ENCODE measurements at regions of chr21 and their contacts with region 1.

Region 1: DNA sequence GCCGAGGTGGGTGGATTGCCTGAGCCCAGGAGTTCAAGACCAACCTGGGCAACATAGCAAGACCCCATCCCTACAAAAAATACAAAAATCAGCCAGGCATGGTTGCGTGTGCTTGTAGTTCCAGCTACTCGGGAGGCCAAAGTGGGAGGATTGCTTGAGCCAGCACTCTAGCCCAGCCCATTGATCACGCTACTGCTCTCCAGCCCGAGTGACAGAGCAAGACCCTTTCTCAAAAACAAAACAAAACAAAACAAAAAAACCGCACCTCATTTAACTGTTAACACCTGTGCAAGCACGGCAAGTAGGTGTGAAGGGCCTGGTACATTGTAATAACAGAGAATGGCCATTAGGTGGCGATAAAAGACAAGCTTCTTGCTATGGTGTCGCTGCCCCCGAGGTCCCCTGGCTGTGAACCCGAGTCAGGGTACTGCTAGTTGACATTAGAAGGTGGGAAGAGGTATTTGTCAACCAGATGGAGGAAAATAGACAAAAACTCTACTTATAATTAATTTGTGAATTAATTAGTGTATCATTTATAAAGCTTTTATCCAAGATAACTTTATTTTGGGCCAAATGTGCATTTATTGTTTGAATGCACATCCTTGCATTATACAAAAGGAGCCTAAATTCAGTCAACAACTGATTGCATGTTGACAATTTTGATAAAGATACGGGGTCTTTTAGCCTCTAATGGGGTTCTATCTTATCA is 66.5 kb downstream of the SH3BGR start:
- DNase-seq: peak; percentile 53
- H3K4me3 ChIP-seq: no peak overlapping the region
- H3K27ac ChIP-seq: no peak overlapping the region
- H3K4me1 ChIP-seq: no peaks in the 10 kb centered on the region
- H3K27me3 ChIP-seq: no peaks in the 10 kb centered on the region; the same call in 1 of the 2 replicates

Region 2: DNA sequence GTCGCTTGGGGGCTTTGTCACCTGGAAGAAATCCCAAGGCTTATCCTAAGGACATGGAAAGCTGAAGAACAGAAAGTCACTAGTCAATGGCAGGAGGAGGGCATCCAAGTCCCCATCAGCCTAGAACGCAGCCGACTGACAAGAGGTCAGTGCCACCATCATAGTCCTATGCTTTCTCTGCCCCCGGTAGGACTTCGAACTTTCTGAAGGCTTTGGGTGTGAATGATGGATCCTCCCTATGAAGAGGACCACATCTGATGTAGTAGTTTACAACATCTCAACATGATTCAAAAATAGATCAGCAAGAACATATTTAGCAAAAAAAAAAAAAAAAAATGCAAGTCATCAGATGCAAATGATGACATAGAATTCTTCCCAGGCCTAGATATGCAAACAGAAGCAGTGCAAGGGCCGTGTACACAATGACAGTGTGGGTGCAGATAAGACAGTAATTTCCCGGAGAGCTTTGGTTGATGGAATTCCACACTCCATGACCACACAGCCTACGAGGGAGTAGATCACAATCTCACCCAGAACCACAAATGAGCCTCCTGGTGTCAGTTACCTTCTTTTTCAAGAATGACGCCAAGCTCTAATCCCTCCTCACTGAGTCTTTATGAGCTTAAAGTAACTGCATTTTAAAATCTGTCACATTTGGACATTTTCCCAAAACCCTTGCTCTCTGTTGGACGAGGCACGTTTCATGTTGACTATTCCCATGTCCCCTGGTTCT is 423.3 kb before region 1 on chr21:
- in situ Hi-C with region 1: no loop called
- DNase-seq: peak; percentile 47
- H3K4me3 ChIP-seq: no peak overlapping the region
- H3K27ac ChIP-seq: no peak overlapping the region
- H3K4me1 ChIP-seq: no peaks in the 10 kb centered on the region
- H3K27me3 ChIP-seq: no peaks in the 10 kb centered on the region

Region 3: GRCh38 chr21:39712972-39713371 is 194.7 kb after region 1 on chr21:
- in situ Hi-C with region 1: loop called (anchors 5 kb)
- DNase-seq: no peak
- H3K4me3 ChIP-seq: no peak overlapping the region
- H3K27ac ChIP-seq: no peak overlapping the region
- H3K4me1 ChIP-seq: no peaks in the 10 kb centered on the region
- H3K27me3 ChIP-seq: no peaks in the 10 kb centered on the region

Region 4: DNA sequence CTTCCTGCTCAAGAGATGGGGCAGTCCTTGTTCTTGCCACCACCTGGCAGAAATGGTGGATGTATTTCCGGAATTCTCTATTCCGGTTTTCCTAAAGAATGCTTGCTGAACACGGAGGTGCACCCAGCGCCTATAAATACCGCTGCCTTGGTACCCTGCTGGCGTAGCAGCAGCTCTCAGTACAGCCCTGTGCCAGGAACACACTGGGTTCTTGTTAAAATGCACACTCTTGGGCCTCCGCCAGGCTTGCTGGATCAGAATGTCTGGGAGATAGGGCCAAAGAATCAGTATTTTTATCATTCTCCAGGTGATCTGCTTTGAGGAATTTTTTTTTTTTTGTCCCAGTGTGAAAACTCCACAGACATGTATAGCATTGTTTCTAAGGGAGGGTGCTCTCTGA is 280.9 kb after region 1 on chr21:
- in situ Hi-C with region 1: no loop called
- DNase-seq: no peak
- H3K4me3 ChIP-seq: no peak overlapping the region
- H3K27ac ChIP-seq: no peak overlapping the region
- H3K4me1 ChIP-seq: no peaks in the 10 kb centered on the region
- H3K27me3 ChIP-seq: no peaks in the 10 kb centered on the region

Measured in GM23248 (cell line).